Adrenal gland (tissue), 19 donors: ENCODE measurements at regions of chr14 and their contacts with region 1.

Region 1: DNA sequence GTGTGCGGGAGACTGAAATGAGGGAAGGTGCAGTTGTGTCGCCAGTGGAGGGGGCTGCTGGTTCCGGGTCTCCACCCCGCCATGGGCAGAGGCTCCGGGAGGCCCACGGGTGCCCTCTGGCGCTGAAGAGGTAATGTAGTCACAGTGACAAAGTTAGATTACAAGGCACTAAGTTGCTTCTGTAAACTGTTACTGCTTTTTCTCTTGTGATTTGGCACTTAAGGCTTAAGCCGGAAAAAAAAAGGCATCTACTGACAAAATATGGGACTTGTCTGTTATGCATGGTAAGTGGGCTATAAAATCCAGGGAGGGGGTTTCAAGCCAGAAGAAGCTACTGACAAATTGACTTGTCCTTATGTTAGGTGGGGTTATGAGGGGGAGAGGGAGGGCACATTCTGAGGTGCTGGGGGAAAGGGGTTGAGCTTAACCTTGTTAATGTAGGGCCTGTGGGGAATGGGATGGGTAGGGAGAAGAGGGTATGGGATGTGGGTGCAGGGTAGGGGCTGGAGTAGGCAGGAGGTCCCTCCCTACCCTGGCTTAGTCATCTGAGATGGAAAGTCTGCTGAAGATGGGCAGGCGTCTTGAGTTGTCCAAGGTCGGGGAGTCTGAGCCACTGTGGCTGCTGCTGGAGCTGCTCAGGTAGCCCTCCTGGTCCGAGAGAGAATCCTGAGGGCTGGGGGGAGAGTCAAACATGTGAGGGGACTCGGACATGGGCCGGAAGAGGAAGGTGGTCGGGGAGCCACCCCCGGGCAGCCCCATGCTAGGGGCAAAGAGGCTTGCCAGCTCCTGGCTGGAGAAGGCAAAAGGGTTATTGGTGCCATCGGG is 3.7 kb downstream of the ZFP36L1 start:
- DNase-seq: peak; percentile 79 to 91 (median 84)
- H3K4me3 ChIP-seq: peak overlapping the region in 3 of 4 donors; percentile 46 to 71 (median 65)
- H3K27ac ChIP-seq: peak overlapping the region in 4 of 5 donors; percentile 11 to 100 (median 91)
- H3K4me1 ChIP-seq: peaks cover 13 to 36% of the 10 kb centered on the region in 2 donors
- H3K27me3 ChIP-seq: no peaks in the 10 kb centered on the region
- CTCF ChIP-seq: peak; percentile 36 to 77 (median 60)
- POLR2A ChIP-seq: peak in 1 of 2 donors; percentile 55

Region 2: DNA sequence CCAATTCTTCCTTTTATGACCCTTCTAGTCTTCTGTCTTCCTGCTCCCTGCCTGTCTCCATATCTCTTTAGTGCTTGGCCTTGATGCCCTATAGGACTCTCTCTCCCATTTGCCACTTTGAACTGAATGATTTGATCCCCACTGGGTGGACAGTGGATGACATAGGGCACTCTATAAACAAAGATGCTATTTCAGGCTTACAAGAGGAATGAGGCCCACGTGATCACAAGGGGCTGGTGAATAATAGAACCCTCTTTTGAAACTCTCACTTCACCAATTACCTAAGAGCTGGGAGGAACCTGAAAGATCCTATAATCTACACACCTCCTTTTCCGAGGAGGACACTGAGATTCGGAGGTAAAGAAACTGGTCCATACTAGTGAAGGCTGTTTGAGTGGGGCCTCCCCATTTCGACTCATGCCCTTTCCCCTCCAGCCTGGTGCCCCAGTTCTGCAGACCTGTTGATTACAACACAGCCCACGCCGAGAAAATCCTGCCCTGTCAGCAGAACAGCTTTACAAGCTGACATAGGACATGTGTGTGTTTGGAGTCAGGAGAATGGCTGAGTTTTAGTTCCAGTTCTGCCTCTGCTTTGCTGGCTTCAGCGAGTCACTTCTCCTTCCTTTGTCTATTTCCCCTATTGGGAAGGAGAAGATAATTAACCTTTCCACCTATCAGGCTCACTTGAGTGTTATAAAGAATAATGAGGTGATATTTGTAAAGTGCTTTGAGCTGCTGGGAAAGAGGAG is 396.6 kb before region 1 on chr14:
- intact Hi-C with region 1: loop called in 1 of 2 experiments (anchors 10 kb)
- DNase-seq: peak; percentile 48 to 77 (median 64)
- H3K4me3 ChIP-seq: no peak overlapping the region
- H3K27ac ChIP-seq: peak overlapping the region; percentile 31 to 84 (median 40)
- H3K4me1 ChIP-seq: peaks cover 21 to 61% of the 10 kb centered on the region in 2 donors
- H3K27me3 ChIP-seq: no peaks in the 10 kb centered on the region
- CTCF ChIP-seq: no peak
- POLR2A ChIP-seq: no peak

Region 3: DNA sequence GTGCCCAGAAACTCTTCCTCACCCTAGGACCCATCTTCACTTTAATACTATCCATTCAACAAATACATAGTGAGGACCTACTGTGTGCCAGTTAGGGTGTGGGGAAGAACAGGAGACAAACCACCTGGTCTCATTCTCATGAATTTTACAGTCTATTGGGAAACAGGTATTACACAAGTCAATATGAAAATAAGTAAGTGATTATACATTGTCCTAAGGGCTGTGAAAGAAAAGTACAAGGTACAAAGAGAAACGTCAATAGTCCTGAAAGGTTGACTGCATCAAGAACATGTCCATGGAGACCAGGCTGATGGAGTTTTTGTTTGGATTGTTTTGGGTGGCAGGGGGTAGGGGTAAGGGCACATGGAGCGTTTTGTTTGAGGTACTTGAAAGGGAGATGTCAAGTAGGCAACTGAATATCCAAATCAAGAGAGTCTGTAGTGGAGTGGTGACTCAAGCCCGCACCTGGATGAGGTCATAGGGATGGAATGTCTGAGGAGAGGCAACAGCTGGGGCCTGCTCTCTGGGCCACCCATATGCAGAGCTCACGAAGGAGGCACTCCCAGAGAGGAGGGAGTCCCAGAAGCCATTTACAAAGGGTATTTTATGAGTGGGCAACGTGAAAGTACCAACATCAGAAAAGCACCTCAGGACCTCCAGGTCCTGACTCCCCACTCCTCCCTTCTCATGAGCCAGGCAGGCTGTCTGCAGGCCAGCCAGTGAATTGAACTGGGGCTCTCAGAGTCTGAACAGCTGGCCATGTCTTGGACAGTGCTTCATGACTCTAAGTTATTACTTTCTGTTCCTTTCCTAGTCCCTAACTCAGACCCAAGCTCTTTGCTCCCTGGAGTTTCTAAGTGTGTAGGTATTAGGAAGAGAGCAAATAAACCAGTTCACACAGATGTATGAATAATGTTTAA is 268.3 kb before region 1 on chr14:
- intact Hi-C with region 1: loop called (anchors 10 kb)
- DNase-seq: no peak
- H3K4me3 ChIP-seq: no peak overlapping the region
- H3K27ac ChIP-seq: peak overlapping the region in 2 of 5 donors; percentile 22 to 60
- H3K4me1 ChIP-seq: peaks cover 3 to 34% of the 10 kb centered on the region in 2 donors
- H3K27me3 ChIP-seq: no peaks in the 10 kb centered on the region
- CTCF ChIP-seq: no peak
- POLR2A ChIP-seq: no peak

Region 4: GRCh38 chr14:68682166-68683103 is 106.8 kb before region 1 on chr14:
- intact Hi-C with region 1: loop called in 1 of 2 experiments (anchors 5 kb)
- DNase-seq: peak; percentile 69 to 89 (median 85)
- H3K4me3 ChIP-seq: no peak overlapping the region
- H3K27ac ChIP-seq: peak overlapping the region; percentile 39 to 87 (median 69)
- H3K4me1 ChIP-seq: peaks cover 24 to 73% of the 10 kb centered on the region in 2 donors
- H3K27me3 ChIP-seq: no peaks in the 10 kb centered on the region
- CTCF ChIP-seq: no peak
- POLR2A ChIP-seq: no peak